PC-9 (cell line): ENCODE measurements at regions of chr21 and their contacts with region 1.

Region 1: GRCh38 chr21:39445321-39446269 is at the start of gene LCA5L:
- DNase-seq: peak; percentile 70 to 92
- H3K4me3 ChIP-seq: peak within 1 kb of the TSS; percentile 88
- H3K27ac ChIP-seq: peak within 1 kb of the TSS; percentile 64
- H3K4me1 ChIP-seq: peaks cover 6% of the 10 kb centered on the region; the same call in 1 of the 2 replicates
- H3K27me3 ChIP-seq: no peaks in the 10 kb centered on the region
- CTCF ChIP-seq: no peak
- total RNA-seq, gene LCA5L: 1.8 and 2.4 TPM in 2 replicates

Region 2: GRCh38 chr21:39183237-39184007 is 262.2 kb before region 1 on chr21 and contains the start of gene PSMG1:
- CTCF ChIA-PET with region 1: no interaction called
- POLR2A ChIA-PET with region 1: no interaction called
- intact Hi-C with region 1: loop called (anchors 5 kb)
- DNase-seq: peak; percentile 73 to 91
- H3K4me3 ChIP-seq: peak within 1 kb of the TSS; percentile 92
- H3K27ac ChIP-seq: peak within 1 kb of the TSS; percentile 61
- H3K4me1 ChIP-seq: peaks cover 9% of the 10 kb centered on the region
- H3K27me3 ChIP-seq: no peaks in the 10 kb centered on the region
- CTCF ChIP-seq: no peak
- total RNA-seq, gene PSMG1: 20.4 and 29.0 TPM in 2 replicates

Region 3: GRCh38 chr21:39313571-39314142 is 131.9 kb before region 1 on chr21 and contains the start of gene BRWD1:
- CTCF ChIA-PET with region 1: interaction called, 3 read pairs
- POLR2A ChIA-PET with region 1: no interaction called
- intact Hi-C with region 1: loop called (anchors 5 kb)
- DNase-seq: peak; percentile 52 to 67
- H3K4me3 ChIP-seq: peak within 1 kb of the TSS; percentile 81
- H3K27ac ChIP-seq: peak within 1 kb of the TSS; percentile 85
- H3K4me1 ChIP-seq: peaks cover 22% of the 10 kb centered on the region
- H3K27me3 ChIP-seq: no peaks in the 10 kb centered on the region
- CTCF ChIP-seq: no peak; the same call in 1 of the 2 replicates
- total RNA-seq, gene BRWD1: 38.9 and 42.9 TPM in 2 replicates